WTC11 (cell line): ENCODE measurements at regions of chr7 and their contacts with region 1.

Region 1: DNA sequence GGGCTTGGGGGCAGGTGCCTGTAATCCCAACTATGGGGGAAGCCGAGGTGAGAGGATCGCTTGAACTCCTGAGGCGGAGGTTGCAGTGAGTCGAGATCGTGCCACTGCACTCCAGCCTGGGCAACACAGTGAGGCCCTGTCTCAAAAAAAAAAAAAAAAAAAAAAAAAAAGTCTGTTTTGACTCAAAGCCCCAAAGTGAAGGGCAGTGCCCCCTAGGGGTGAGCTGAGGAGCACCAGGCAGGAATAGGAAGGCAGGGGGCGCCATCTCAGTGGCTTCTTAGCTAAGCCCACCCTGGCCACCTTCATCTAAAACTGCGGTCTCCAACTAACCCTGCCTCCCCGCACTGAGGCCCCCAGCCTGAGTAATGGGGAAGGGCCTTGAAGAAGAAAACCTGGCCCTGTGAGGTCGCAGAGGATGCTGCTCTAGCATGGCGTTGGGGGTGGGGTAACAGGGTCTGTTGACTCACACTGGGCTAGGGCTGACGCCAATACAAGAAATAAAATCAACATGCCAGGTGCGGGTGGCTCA is 9.8 kb downstream of the PODXL start:
- DNase-seq: peak; percentile 90
- ATAC-seq: peak; percentile 85
- H3K4me3 Mint-ChIP-seq: no peak overlapping the region; the same call in 1 of the 2 replicates
- H3K27ac Mint-ChIP-seq: no peak overlapping the region
- H3K4me1 Mint-ChIP-seq: peaks cover 95% of the 10 kb centered on the region
- H3K27me3 Mint-ChIP-seq: no peaks in the 10 kb centered on the region
- CTCF ChIP-seq: peak; percentile 95

Region 2: GRCh38 chr7:131493581-131493980 is 53.1 kb before region 1 on chr7:
- CTCF ChIA-PET with region 1: interaction called, 11 read pairs
- POLR2A ChIA-PET with region 1: no interaction called
- DNase-seq: no peak
- ATAC-seq: peak; percentile 6; the same call in 1 of the 2 replicates
- H3K4me3 Mint-ChIP-seq: no peak overlapping the region
- H3K27ac Mint-ChIP-seq: 0 out of 2 replicates have a peak overlapping the region, but pooled peaks have one; percentile 21
- H3K4me1 Mint-ChIP-seq: no peaks in the 10 kb centered on the region
- H3K27me3 Mint-ChIP-seq: no peaks in the 10 kb centered on the region
- CTCF ChIP-seq: no peak

Region 3: GRCh38 chr7:131521651-131522163 is 24.9 kb before region 1 on chr7:
- CTCF ChIA-PET with region 1: interaction called, 22 read pairs
- POLR2A ChIA-PET with region 1: interaction called, 3 read pairs
- DNase-seq: peak; percentile 41
- ATAC-seq: peak; percentile 80
- H3K4me3 Mint-ChIP-seq: peak overlapping the region; percentile 46
- H3K27ac Mint-ChIP-seq: peak overlapping the region; percentile 89
- H3K4me1 Mint-ChIP-seq: peaks cover 87% of the 10 kb centered on the region
- H3K27me3 Mint-ChIP-seq: no peaks in the 10 kb centered on the region
- CTCF ChIP-seq: no peak

Region 4: DNA sequence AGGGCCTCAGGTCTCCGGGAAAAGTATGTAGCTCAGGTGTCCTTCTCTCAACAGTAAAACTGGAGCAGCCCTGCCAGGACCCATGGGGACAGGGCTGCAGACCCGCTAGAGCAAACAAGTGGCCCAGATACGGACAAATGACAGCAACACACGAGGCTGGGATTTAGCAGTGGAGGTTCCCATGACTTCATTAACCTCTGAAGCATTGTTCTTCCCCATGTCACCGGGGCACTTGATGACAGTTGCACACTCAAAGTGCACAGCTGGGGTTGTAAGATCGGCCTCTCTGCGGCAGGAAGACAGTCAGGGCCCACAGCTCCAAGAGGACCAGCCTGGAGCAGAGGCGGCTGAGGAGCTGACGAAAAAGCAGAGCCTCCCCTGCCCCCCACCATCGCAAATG is 22.3 kb after region 1 on chr7:
- CTCF ChIA-PET with region 1: interaction called, 17 read pairs
- POLR2A ChIA-PET with region 1: interaction called, 13 read pairs
- DNase-seq: no peak
- ATAC-seq: peak; percentile 34; the same call in 1 of the 2 replicates
- H3K4me3 Mint-ChIP-seq: no peak overlapping the region
- H3K27ac Mint-ChIP-seq: no peak overlapping the region
- H3K4me1 Mint-ChIP-seq: peaks cover 27% of the 10 kb centered on the region
- H3K27me3 Mint-ChIP-seq: peaks cover 25% of the 10 kb centered on the region
- CTCF ChIP-seq: no peak

Region 5: GRCh38 chr7:131604841-131605279 is 58.2 kb after region 1 on chr7:
- CTCF ChIA-PET with region 1: interaction called, 91 read pairs
- POLR2A ChIA-PET with region 1: interaction called, 4 read pairs
- DNase-seq: no peak
- ATAC-seq: peak; percentile 43
- H3K4me3 Mint-ChIP-seq: peak overlapping the region; percentile 59
- H3K27ac Mint-ChIP-seq: peak overlapping the region; percentile 100
- H3K4me1 Mint-ChIP-seq: peaks cover 81% of the 10 kb centered on the region
- H3K27me3 Mint-ChIP-seq: no peaks in the 10 kb centered on the region; the same call in 1 of the 2 replicates
- CTCF ChIP-seq: no peak

Region 6: DNA sequence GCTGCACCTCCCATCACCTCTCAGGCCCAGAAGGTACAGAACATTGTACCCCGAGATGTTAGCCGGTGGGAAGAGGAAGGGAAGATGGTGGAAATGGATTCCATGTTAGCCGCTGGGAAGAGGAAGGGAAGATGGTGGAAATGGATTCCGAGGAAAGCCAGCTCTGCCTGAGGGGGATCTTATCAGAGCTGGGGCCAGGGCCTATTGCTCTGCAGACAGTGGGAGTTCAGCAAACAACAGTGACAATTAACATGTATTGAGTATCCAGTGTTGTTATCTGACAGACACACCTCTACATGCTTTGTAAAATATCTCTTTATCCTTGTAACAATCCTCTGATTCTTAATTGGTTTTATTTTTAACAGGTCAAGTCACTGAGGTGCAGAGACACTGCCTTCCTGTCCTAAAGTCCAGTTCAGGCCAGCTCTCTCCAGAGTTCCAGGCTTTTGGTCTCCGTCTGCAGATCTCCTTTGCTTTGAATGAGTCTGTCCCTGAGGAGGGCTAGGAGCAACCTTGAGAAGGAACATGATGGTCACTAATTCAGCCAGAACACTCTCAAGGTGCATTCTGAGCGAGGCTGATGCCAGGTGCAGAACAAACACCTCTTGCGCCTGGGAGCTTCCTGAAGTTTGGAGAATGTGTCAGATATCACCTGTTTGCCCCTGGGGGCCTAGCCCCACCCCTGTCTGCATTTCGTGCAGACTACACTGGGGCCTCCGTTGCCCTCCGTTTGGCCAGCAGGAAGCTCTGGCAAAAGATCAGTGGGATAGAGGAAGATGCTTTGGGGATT is 92.2 kb after region 1 on chr7:
- CTCF ChIA-PET with region 1: interaction called, 22 read pairs
- POLR2A ChIA-PET with region 1: no interaction called
- DNase-seq: no peak
- ATAC-seq: peak; percentile 21
- H3K4me3 Mint-ChIP-seq: no peak overlapping the region
- H3K27ac Mint-ChIP-seq: no peak overlapping the region
- H3K4me1 Mint-ChIP-seq: peaks cover 43% of the 10 kb centered on the region
- H3K27me3 Mint-ChIP-seq: peaks cover 25% of the 10 kb centered on the region
- CTCF ChIP-seq: no peak